CD14-positive monocyte (primary cell): ENCODE measurements at regions of chr19 and their contacts with region 1.

Region 1: GRCh38 chr19:30857388-30857787 is 485.2 kb downstream of the ZNF536 start:
- DNase-seq: no peak
- H3K4me3 ChIP-seq: no peak overlapping the region
- H3K4me3 Mint-ChIP-seq: no peak overlapping the region
- H3K27ac ChIP-seq: no peak overlapping the region
- H3K27ac Mint-ChIP-seq: no peak overlapping the region
- H3K4me1 ChIP-seq: no peaks in the 10 kb centered on the region
- H3K4me1 Mint-ChIP-seq: peaks cover 19% of the 10 kb centered on the region
- H3K27me3 ChIP-seq: no peaks in the 10 kb centered on the region
- H3K27me3 Mint-ChIP-seq: no peaks in the 10 kb centered on the region
- CTCF ChIP-seq: no peak

Region 2: DNA sequence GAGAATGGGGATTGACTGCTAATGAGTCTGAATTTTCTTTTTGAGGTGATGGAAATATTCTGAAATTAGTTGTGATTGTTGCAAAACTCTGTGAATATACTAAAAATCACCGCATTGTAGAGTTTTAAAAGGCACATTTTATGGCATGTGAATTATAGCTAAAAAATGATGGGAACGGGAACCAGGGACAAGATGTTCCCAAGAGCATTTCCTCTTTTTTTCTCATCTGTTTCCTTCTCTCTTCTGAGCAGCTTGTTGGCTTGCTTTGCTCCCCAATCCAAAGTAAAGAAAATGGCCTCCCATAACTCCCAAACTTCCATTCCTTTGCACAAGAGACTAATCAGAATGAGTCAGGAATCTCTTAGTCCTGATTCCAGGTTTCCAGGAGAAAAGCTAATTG is 32.6 kb after region 1 on chr19:
- intact Hi-C with region 1: loop called in 1 of 2 experiments (anchors 5 kb)
- DNase-seq: peak in 1 of 3 donors; percentile 23
- H3K4me3 ChIP-seq: no peak overlapping the region
- H3K4me3 Mint-ChIP-seq: peak overlapping the region in 1 of 2 donors; percentile 31
- H3K27ac ChIP-seq: no peak overlapping the region
- H3K27ac Mint-ChIP-seq: peak overlapping the region in 2 of 7 donors; percentile 5 to 22
- H3K4me1 ChIP-seq: peaks cover 10 to 13% of the 10 kb centered on the region in 2 donors
- H3K4me1 Mint-ChIP-seq: peaks cover 15% of the 10 kb centered on the region
- H3K27me3 ChIP-seq: no peaks in the 10 kb centered on the region
- H3K27me3 Mint-ChIP-seq: peaks cover 0 to 2% (median 0%) of the 10 kb centered on the region in 3 donors
- CTCF ChIP-seq: no peak

Region 3: GRCh38 chr19:30943101-30943843 is 85.9 kb after region 1 on chr19:
- intact Hi-C with region 1: no loop called
- DNase-seq: no peak
- H3K4me3 ChIP-seq: no peak overlapping the region
- H3K4me3 Mint-ChIP-seq: no peak overlapping the region
- H3K27ac ChIP-seq: no peak overlapping the region
- H3K27ac Mint-ChIP-seq: no peak overlapping the region
- H3K4me1 ChIP-seq: no peaks in the 10 kb centered on the region
- H3K4me1 Mint-ChIP-seq: no peaks in the 10 kb centered on the region
- H3K27me3 ChIP-seq: no peaks in the 10 kb centered on the region
- H3K27me3 Mint-ChIP-seq: peaks cover 3 to 9% (median 3%) of the 10 kb centered on the region in 3 donors
- CTCF ChIP-seq: no peak